ENCODE measurements at regions of chr2 and their contacts with region 1.

Region 1: GRCh38 chr2:73243884-73244570 is 9.9 kb downstream of the CCT7 start:
- DNase-seq: no peak
- H3K4me3 ChIP-seq: no peak overlapping the region
- H3K27ac ChIP-seq: no peak overlapping the region
- H3K4me1 ChIP-seq: peaks cover 0 to 2% (median 0%) of the 10 kb centered on the region in 4 donors
- H3K27me3 ChIP-seq: no peaks in the 10 kb centered on the region
- CTCF ChIP-seq: no peak
- EP300 ChIP-seq: no peak
- POLR2A ChIP-seq: no peak

Region 2: DNA sequence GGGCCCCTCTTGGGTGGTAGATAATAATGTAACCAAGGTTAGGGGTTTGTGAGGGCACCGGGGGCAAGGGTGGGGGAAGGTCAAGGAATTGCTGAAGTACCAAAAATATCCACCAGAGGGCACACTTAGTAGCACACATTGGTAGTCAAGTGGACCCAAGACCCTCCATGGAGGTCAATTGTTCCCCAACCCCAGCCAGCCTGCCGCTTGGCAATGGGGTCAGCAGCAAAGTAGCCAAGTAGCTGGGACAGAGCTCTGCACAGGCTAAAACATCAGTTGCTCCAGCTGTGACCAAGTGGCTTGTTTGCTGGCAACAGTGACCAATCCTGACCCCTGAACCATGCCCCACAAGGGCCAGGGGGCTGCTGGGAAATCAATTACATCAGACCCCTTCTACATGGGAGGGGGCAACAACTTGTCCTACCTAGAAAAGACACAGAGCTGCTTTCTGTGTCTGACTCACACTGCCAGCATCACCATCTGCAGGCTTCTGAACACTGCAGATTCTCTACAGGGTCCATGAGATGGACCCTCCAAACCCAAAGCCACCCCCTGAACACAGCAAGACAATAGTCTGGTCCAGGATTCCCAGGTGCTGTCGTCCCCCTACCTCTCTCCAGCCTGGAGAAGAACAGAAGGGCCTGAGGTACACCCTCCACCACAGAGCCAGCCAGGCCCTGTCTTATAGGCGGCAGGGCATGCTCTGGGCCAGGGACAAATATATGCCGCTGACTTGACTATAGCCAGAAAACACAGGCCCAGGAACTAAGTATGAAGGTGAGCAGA is 250.7 kb before region 1 on chr2:
- in situ Hi-C with region 1: no loop called
- intact Hi-C with region 1: no loop called
- DNase-seq: no peak
- H3K4me3 ChIP-seq: no peak overlapping the region
- H3K27ac ChIP-seq: no peak overlapping the region
- H3K4me1 ChIP-seq: no peaks in the 10 kb centered on the region
- H3K27me3 ChIP-seq: no peaks in the 10 kb centered on the region
- CTCF ChIP-seq: peak; percentile 81 to 88 (median 86)
- EP300 ChIP-seq: no peak
- POLR2A ChIP-seq: no peak

Region 3: DNA sequence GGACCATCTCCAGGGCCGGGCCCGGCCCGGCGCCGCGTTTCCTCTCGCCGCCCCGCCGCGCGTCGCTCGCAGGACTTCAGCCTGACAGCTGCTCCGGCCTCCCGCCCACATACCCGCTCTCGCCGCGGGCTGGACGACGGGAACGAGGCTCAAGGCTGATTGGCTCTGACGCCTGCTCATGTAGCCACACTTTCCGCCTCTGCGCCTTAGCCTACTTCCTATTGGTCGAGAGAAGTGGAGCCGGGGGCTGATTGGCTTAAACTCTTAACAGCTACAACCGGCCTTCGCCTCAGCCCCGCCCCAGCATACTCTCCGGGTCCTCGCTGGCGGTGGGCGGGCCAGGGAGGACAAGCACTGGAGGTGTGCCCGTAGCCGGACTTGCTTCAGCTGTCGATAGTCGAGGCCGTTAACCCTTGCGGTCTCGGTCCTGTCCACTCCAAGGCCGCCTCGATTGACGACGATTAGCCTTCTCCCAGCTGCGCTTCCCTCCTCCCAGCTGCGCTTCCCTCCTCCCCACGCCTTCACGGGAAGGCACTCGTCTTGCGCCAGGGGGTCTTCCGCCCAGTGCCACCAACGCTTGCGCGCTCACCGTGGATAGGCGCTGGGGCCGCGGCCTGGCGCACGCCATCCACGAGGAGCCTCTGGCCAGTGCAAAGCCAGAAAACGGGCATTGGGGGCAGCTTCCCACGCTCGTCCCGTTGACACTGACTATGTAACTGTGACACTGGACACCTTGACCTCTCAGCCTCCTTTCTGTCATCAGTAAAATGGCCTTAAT is 10.7 kb before region 1 on chr2 and contains the start of gene PRADC1:
- in situ Hi-C with region 1: no loop called
- intact Hi-C with region 1: no loop called
- DNase-seq: peak; percentile 99
- H3K4me3 ChIP-seq: peak within 1 kb of the TSS; percentile 69 to 92 (median 84)
- H3K27ac ChIP-seq: peak within 1 kb of the TSS; percentile 92 to 99 (median 98)
- H3K4me1 ChIP-seq: peaks cover 16 to 32% (median 24%) of the 10 kb centered on the region in 4 donors
- H3K27me3 ChIP-seq: no peaks in the 10 kb centered on the region
- CTCF ChIP-seq: no peak
- EP300 ChIP-seq: no peak
- POLR2A ChIP-seq: peak; percentile 78
- total RNA-seq, gene PRADC1: 44.3 to 77.1 (median 61.8) TPM

Region 4: DNA sequence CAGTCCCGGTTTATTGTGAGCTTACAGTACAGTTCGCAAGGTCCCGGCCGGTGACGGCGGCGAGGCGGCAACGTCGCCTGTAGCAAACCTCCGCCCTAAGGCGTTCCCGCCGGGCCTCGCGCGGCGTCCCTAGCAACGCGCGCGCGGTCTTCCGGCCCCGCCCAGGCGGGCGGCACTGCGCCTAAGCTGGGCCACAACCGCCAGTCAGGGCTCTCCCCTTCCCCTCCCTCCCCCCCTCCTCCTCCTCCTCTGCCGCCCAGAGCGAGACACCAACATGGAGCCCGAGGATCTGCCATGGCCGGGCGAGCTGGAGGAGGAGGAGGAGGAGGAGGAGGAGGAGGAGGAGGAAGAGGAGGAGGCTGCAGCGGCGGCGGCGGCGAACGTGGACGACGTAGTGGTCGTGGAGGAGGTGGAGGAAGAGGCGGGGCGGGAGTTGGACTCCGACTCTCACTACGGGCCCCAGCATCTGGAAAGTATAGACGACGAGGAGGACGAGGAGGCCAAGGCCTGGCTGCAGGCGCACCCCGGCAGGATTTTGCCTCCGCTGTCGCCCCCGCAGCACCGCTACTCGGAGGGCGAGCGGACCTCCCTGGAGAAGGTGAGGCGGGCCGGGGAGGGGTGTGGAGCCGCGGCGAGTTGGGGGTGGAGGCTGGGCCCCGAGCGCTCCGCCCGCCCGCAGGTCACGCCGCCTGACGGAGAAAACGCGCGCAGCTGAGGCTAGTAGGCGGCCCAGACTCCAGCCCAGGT is 141.7 kb after region 1 on chr2 and contains the start of gene ALMS1:
- in situ Hi-C with region 1: no loop called
- intact Hi-C with region 1: loop called (anchors 10 kb)
- DNase-seq: peak; percentile 92
- H3K4me3 ChIP-seq: peak within 1 kb of the TSS; percentile 67 to 90 (median 80)
- H3K27ac ChIP-seq: peak within 1 kb of the TSS; percentile 89 to 98 (median 94)
- H3K4me1 ChIP-seq: peaks cover 0 to 18% (median 11%) of the 10 kb centered on the region in 4 donors
- H3K27me3 ChIP-seq: peaks cover under 1% of the 10 kb centered on the region
- CTCF ChIP-seq: peak; percentile 14 to 37 (median 22)
- EP300 ChIP-seq: no peak
- POLR2A ChIP-seq: peak; percentile 16
- total RNA-seq, gene ALMS1: 22.4 to 72.4 (median 29.9) TPM

Region 5: DNA sequence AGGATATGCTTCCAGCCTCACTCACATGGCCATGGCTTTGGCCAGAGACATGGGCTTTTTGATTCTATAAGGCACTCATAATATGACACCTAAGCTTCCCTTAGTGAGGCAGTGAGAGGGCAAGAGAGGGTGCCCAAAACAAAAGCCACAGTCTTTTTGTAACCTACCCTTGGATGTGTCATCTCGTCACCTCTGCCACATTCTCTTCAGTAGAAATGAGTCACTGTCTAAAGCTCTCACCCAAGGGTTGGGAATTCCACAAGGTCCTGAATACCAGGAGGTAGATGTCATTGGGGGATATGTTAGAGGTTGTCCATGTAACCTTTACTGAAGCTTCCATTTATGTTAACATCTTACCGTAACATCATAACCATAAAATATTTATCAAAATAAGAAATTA is 250.0 kb after region 1 on chr2:
- in situ Hi-C with region 1: no loop called
- intact Hi-C with region 1: no loop called
- DNase-seq: no peak
- H3K4me3 ChIP-seq: no peak overlapping the region
- H3K27ac ChIP-seq: no peak overlapping the region
- H3K4me1 ChIP-seq: no peaks in the 10 kb centered on the region
- H3K27me3 ChIP-seq: no peaks in the 10 kb centered on the region
- CTCF ChIP-seq: no peak
- EP300 ChIP-seq: no peak
- POLR2A ChIP-seq: no peak

Measured in transverse colon (tissue), 4 donors.